SK-N-SH (cell line): ENCODE measurements at regions of chr17 and their contacts with region 1.

Region 1: DNA sequence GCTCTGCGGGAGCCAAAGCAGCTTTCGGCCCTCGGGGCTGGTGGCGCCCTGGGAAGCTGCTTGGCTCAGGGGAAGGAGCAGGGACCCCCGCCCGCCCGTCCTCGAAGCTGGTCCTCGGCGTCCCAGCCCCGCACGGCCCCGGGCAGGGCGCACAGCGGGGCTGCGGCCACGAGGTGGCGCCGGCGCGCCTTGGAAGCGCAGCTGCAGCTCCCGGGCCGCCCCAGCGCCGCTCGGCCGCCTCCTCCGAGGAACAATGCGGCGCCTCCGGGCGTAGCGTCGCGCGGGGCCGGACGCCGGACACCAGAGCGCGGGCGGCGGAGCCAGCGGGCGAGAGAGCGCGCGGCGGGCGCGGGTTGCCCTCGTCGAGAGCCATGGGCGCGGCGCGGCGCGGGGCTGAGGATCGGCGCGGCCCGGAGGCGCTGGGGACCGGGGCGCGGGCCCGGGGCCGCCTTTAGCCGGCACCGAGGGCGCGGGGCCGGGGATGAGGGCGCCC is at the start of gene MGAT5B:
- DNase-seq: peak; percentile 100
- H3K4me3 ChIP-seq: peak within 1 kb of the TSS; percentile 56 to 74
- H3K27ac ChIP-seq: peak within 1 kb of the TSS in 1 of 2 experiments; percentile 60; a peak in 2 of 4 replicates
- H3K4me1 ChIP-seq: peaks cover 17 to 36% of the 10 kb centered on the region in 2 experiments; a peak in 3 of 4 replicates
- H3K27me3 ChIP-seq: no peaks in the 10 kb centered on the region
- CTCF ChIP-seq: peak; percentile 80
- EP300 ChIP-seq: no peak; a peak in 1 of 4 replicates
- RAD21 ChIP-seq: peak; percentile 93
- polyA plus RNA-seq, gene MGAT5B: 10.3 and 13.8 TPM in 2 replicates

Region 2: DNA sequence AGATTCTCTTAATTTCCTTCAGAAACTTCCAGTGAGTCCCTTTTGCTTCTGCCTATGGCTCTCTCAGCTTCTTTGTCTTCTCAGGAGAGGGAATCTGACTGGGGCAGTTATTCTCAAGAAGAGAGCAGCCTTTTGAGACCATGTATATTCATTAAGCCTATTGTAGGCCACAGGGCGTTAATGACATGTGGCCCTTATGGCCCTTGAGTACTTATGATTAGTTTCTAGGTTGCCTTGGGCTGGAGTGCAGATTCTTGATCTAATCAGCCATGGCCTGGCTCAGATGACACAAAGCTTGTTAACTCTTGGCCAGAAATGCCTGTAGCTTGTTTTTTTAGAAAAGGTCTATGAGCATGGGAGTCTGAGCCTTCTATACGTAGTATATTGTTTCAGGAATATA is 112.9 kb before region 1 on chr17:
- CTCF ChIA-PET with region 1: no interaction called
- POLR2A ChIA-PET with region 1: no interaction called
- DNase-seq: peak; percentile 34
- H3K4me3 ChIP-seq: no peak overlapping the region
- H3K27ac ChIP-seq: no peak overlapping the region
- H3K4me1 ChIP-seq: no peaks in the 10 kb centered on the region
- H3K27me3 ChIP-seq: no peaks in the 10 kb centered on the region
- CTCF ChIP-seq: no peak
- EP300 ChIP-seq: no peak
- RAD21 ChIP-seq: no peak

Region 3: DNA sequence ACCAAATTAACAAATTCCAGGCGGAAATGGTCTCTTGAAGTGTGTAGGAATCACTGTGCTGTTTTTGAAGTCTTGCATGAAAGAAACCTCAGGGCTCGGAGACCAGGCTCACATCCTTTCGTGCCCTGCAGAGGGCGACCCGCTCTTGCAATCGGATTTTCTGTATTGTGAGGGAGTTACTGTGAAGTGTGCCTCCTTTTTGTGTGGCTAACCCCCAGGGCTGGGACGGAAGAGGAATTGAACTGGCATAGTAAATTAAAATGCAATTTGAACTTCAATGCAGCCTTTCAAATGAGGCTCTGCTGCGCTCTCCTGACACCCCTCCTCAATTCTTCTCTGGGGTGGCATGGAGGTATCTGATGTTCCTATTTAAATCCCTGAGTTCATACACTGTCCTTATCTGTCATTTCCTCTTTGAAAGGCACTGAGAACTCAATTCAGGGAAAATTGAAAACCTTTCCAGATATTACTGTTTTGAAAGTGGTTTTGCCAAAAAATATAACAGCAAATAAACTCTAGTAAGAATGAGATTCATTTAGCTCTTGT is 51.6 kb before region 1 on chr17:
- CTCF ChIA-PET with region 1: interaction called, 71 read pairs
- POLR2A ChIA-PET with region 1: interaction called, 4 read pairs
- DNase-seq: peak; percentile 85
- H3K4me3 ChIP-seq: no peak overlapping the region
- H3K27ac ChIP-seq: no peak overlapping the region
- H3K4me1 ChIP-seq: peaks cover 0 to 14% of the 10 kb centered on the region in 2 experiments; a peak in 1 of 4 replicates
- H3K27me3 ChIP-seq: peaks cover 12% of the 10 kb centered on the region; the same call in 1 of the 2 replicates
- CTCF ChIP-seq: peak; percentile 93
- EP300 ChIP-seq: no peak
- RAD21 ChIP-seq: peak; percentile 98

Region 4: GRCh38 chr17:76852843-76853242 is 15.4 kb before region 1 on chr17:
- CTCF ChIA-PET with region 1: interaction called, 39 read pairs
- POLR2A ChIA-PET with region 1: no interaction called
- DNase-seq: no peak
- H3K4me3 ChIP-seq: no peak overlapping the region
- H3K27ac ChIP-seq: no peak overlapping the region
- H3K4me1 ChIP-seq: peaks cover 0 to 5% of the 10 kb centered on the region in 2 experiments; a peak in 1 of 4 replicates
- H3K27me3 ChIP-seq: peaks cover 11% of the 10 kb centered on the region; the same call in 1 of the 2 replicates
- CTCF ChIP-seq: no peak
- EP300 ChIP-seq: no peak
- RAD21 ChIP-seq: no peak

Region 5: DNA sequence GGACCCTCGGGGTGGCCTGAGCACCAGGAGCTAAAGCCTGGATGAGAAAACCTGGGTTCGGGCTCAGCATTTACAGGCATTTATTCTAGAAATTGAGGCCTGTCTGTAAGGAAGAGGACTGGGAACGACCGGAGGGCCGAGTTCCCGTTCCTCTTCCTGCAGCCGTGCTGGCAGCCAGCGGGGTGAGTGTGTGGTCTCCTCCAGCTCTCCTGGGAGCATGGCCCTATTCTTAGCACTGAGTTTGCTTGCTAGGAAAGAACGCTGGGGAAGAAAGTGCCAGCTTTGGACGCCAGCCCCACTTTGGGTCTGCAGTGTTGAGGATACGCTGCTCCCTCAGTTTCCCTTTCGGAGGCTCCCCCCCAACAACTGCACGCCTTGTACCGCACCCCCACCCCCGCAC is 49.6 kb after region 1 on chr17:
- CTCF ChIA-PET with region 1: interaction called, 26 read pairs
- POLR2A ChIA-PET with region 1: no interaction called
- DNase-seq: no peak
- H3K4me3 ChIP-seq: no peak overlapping the region
- H3K27ac ChIP-seq: no peak overlapping the region
- H3K4me1 ChIP-seq: no peaks in the 10 kb centered on the region; a peak in 1 of 4 replicates
- H3K27me3 ChIP-seq: no peaks in the 10 kb centered on the region
- CTCF ChIP-seq: no peak
- EP300 ChIP-seq: no peak
- RAD21 ChIP-seq: no peak

Region 6: GRCh38 chr17:76968707-76969597 is 100.7 kb after region 1 on chr17:
- CTCF ChIA-PET with region 1: interaction called, 13 read pairs
- POLR2A ChIA-PET with region 1: interaction called, 3 read pairs
- DNase-seq: peak; percentile 84
- H3K4me3 ChIP-seq: peak overlapping the region; percentile 28 to 39; a peak in 3 of 4 replicates
- H3K27ac ChIP-seq: peak overlapping the region in 1 of 2 experiments; percentile 85; a peak in 2 of 4 replicates
- H3K4me1 ChIP-seq: peaks cover 3 to 20% of the 10 kb centered on the region in 2 experiments; a peak in 1 of 4 replicates
- H3K27me3 ChIP-seq: peaks cover 41% of the 10 kb centered on the region; the same call in 1 of the 2 replicates
- CTCF ChIP-seq: no peak
- EP300 ChIP-seq: peak in 1 of 2 experiments; percentile 45; a peak in 1 of 4 replicates
- RAD21 ChIP-seq: no peak

Region 7: DNA sequence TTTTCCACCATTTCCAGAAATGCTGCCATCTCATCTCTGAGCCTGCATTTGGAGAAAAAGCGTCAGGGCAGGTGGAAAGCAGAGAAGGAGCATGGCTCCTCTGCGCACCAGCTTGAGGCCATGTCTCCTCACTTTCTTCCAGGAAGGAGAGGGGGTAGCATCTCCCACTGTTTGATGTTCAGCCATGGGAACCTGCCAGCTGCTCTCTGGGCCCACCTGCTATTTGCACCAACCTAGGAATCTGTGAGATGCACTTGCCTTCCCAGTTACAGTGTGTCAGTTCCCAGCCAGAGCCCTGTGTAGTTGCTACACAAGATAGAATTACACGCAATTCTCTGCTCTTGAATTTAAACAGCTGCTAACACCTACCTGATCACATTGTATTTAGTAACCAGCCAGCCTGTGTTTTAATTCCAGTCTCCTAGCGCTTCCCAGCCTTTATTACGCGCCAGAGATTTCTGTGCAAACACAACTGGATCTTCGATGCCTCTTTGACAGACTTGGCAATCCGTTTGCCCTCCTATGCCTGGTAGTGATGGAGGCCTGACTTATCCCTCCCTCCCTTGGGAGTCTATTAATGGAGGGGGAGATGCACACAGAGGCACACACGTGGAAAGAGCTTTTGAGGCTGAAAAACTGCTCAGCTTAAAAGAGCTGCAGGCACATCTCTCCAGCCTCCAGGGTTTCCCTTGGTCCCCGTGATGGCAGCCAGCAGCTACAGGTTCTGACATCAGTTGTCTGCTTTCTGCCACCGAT is 174.4 kb after region 1 on chr17:
- CTCF ChIA-PET with region 1: interaction called, 42 read pairs
- POLR2A ChIA-PET with region 1: no interaction called
- DNase-seq: no peak
- H3K4me3 ChIP-seq: no peak overlapping the region
- H3K27ac ChIP-seq: no peak overlapping the region
- H3K4me1 ChIP-seq: peaks cover 0 to 2% of the 10 kb centered on the region in 2 experiments; a peak in 1 of 4 replicates
- H3K27me3 ChIP-seq: peaks cover 13% of the 10 kb centered on the region; the same call in 1 of the 2 replicates
- CTCF ChIP-seq: no peak
- EP300 ChIP-seq: no peak
- RAD21 ChIP-seq: no peak

Region 8: GRCh38 chr17:77088455-77089123 is 220.4 kb after region 1 on chr17:
- CTCF ChIA-PET with region 1: interaction called, 35 read pairs
- POLR2A ChIA-PET with region 1: interaction called, 8 read pairs
- DNase-seq: peak; percentile 93
- H3K4me3 ChIP-seq: peak overlapping the region; percentile 69 to 85
- H3K27ac ChIP-seq: peak overlapping the region; percentile 85 to 87
- H3K4me1 ChIP-seq: peaks cover 5 to 25% of the 10 kb centered on the region in 2 experiments; a peak in 1 of 4 replicates
- H3K27me3 ChIP-seq: no peaks in the 10 kb centered on the region
- CTCF ChIP-seq: peak; percentile 79
- EP300 ChIP-seq: peak in 1 of 2 experiments; percentile 16; a peak in 1 of 4 replicates
- RAD21 ChIP-seq: peak; percentile 48